Right ventricle myocardium superior (tissue), 1 donor: ENCODE measurements at regions of chr4 and their contacts with region 1.

Region 1: GRCh38 chr4:78864405-78865024 is 74.7 kb downstream of the PAQR3 start:
- DNase-seq: no peak
- ATAC-seq: peak; percentile 77

Region 2: GRCh38 chr4:77959566-77960338 is 904.8 kb before region 1 on chr4:
- intact Hi-C with region 1: loop called (anchors 10 kb)
- DNase-seq: no peak
- ATAC-seq: peak; percentile 52

Region 3: GRCh38 chr4:78612398-78613178 is 251.9 kb before region 1 on chr4:
- intact Hi-C with region 1: loop called (anchors 2 kb)
- DNase-seq: no peak
- ATAC-seq: peak; percentile 85

Region 4: GRCh38 chr4:78775303-78776030 is 89.0 kb before region 1 on chr4:
- intact Hi-C with region 1: loop called (anchors 2 kb)
- DNase-seq: peak; percentile 93
- ATAC-seq: peak; percentile 94

Region 5: GRCh38 chr4:79603681-79604080 is 739.2 kb after region 1 on chr4:
- intact Hi-C with region 1: no loop called
- DNase-seq: no peak
- ATAC-seq: no peak